Psoas muscle (tissue), 8 donors: ENCODE measurements at regions of chrX and their contacts with region 1.

Region 1: GRCh38 chrX:97594646-97595224 is 711.0 kb downstream of the RPA4 start:
- DNase-seq: no peak
- ATAC-seq: no peak
- H3K4me3 ChIP-seq: no peak overlapping the region
- H3K27ac ChIP-seq: no peak overlapping the region
- H3K4me1 ChIP-seq: no peaks in the 10 kb centered on the region
- H3K27me3 ChIP-seq: peaks cover 0 to 6% (median 0%) of the 10 kb centered on the region in 3 donors
- CTCF ChIP-seq: no peak

Region 2: DNA sequence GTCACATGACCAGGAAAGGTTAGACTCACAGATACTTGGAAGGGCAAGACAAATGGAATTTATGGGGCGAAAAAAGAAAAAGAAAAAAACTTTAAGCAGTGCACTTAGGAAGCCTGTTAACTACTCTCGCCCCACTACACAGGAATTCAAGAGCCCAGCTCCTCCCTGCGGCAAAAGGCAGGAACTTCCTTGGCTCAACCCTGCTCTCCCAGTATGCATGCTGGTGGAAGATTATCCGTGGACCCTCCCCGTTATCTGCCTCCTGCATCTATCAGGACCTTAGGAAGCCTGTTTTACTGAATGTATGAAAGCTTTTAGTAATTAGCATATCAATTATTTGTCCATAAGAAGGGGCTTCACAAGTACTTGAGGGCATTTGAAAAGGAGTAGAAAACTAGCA is 751.2 kb before region 1 on chrX:
- intact Hi-C with region 1: no loop called
- DNase-seq: no peak
- ATAC-seq: peak in 1 of 4 donors; percentile 41
- H3K4me3 ChIP-seq: no peak overlapping the region
- H3K27ac ChIP-seq: no peak overlapping the region
- H3K4me1 ChIP-seq: peaks cover 5% of the 10 kb centered on the region
- H3K27me3 ChIP-seq: no peaks in the 10 kb centered on the region
- CTCF ChIP-seq: peak; percentile 8

Region 3: DNA sequence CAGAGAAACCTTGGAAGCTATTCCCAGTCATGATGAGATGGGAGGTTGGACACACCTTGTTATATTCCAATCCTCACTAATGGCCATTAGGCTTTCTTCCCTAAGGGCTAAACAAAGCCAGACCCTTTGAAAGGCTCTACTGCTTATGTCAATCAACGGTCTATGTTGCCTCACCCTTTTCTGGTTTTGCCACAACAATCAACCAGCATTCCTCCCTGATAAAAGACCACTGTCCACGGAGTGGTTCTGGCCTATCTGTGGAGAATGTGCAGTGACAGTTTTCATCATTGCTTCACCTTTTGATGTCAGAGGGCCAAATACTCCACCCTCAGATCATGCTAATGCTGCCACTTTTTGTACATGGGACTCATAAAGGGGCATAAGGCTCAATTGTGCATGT is 202.3 kb after region 1 on chrX:
- intact Hi-C with region 1: loop called in 1 of 2 experiments (anchors 5 kb)
- DNase-seq: no peak
- ATAC-seq: no peak
- H3K4me3 ChIP-seq: no peak overlapping the region
- H3K27ac ChIP-seq: no peak overlapping the region
- H3K4me1 ChIP-seq: no peaks in the 10 kb centered on the region
- H3K27me3 ChIP-seq: no peaks in the 10 kb centered on the region
- CTCF ChIP-seq: no peak